ENCODE measurements at regions of chr11 and their contacts with region 1.

Region 1: GRCh38 chr11:75142714-75143419 is 8.0 kb upstream of the SLCO2B1 start:
- DNase-seq: peak; percentile 68
- CTCF ChIP-seq: peak; percentile 6

Region 2: DNA sequence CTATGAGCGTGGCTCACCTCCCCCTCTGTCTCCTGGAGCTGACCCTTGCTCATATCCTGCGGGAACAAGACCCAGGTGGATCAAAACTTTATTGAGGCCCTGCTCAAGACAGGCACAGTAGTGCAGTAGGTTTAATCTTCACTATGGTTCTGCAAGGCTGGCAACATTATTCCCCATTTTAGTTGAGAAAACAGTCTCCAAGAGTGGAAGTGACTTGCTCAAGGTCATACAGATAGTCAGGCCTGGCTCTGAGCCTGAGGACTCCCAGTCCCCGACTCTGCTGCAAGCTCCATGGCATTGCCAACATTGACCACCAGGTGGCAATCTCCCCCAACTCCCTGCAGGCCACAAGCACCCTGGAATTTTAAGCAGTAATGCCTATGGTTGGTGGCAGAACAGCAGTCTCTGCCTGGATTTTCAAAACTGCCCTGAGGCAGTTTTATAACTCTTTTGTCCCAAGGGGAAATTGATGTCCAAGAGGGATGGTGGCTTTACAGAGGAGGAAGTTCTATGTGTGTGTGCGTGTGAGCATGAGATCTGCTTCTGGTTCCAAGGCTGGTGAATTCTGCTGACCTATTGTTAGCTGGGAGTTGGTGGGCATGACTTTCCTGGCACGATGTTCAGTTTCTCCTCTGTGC is 120.0 kb before region 1 on chr11:
- CTCF ChIA-PET with region 1: interaction called, 20 read pairs
- POLR2A ChIA-PET with region 1: no interaction called
- DNase-seq: peak; percentile 83
- CTCF ChIP-seq: peak; percentile 97

Region 3: GRCh38 chr11:75100314-75100713 is 42.6 kb before region 1 on chr11:
- CTCF ChIA-PET with region 1: interaction called, 27 read pairs
- POLR2A ChIA-PET with region 1: no interaction called
- DNase-seq: peak; percentile 75
- CTCF ChIP-seq: no peak

Region 4: DNA sequence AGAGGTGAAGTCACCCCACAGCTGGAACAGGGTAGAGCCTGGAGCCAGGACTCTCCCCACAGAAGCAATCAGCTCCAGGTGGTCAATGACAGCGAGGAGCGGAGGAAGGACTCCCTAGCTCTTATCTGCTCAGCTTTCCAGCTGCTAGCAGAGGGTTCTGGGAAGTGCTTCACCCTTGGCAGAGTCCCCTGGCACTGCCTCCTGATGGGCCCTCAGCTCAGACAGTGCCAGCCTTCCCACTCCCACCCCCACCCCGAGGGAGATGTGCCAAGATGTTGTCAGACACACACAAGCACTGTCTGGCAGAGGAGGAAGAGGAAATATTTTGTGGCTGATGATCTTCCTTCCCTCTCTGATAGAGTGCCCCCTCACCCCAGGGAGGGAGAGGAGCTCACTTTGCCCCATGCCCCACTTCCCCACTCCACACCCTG is 52.3 kb after region 1 on chr11:
- CTCF ChIA-PET with region 1: interaction called, 43 read pairs
- POLR2A ChIA-PET with region 1: no interaction called
- DNase-seq: no peak
- CTCF ChIP-seq: no peak

Region 5: DNA sequence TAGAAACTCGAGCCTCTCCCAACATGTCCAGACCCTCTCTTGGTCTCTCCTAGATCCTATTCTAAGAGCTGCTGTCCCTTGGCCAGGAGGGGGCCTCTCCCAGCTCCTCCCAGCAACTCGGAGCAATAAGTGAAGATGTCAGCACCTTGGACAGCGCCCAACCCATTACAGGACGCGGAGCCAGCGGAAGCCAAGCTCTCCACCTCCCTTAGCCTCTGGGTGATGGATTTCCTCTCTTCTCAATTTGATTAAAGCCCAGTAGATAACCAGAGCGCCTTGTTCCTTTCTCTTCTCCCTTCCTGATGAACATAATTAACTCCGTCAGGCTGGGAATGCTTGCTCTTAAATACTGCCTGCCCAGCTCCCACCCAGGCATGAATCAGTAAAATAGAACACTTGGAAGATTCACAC is 71.5 kb after region 1 on chr11:
- CTCF ChIA-PET with region 1: interaction called, 301 read pairs
- POLR2A ChIA-PET with region 1: no interaction called
- DNase-seq: peak; percentile 74
- CTCF ChIP-seq: no peak

Region 6: GRCh38 chr11:75241036-75241905 is 98.4 kb after region 1 on chr11:
- CTCF ChIA-PET with region 1: interaction called, 496 read pairs
- POLR2A ChIA-PET with region 1: interaction called, 9 read pairs
- DNase-seq: peak; percentile 95
- CTCF ChIP-seq: peak; percentile 99

Region 7: DNA sequence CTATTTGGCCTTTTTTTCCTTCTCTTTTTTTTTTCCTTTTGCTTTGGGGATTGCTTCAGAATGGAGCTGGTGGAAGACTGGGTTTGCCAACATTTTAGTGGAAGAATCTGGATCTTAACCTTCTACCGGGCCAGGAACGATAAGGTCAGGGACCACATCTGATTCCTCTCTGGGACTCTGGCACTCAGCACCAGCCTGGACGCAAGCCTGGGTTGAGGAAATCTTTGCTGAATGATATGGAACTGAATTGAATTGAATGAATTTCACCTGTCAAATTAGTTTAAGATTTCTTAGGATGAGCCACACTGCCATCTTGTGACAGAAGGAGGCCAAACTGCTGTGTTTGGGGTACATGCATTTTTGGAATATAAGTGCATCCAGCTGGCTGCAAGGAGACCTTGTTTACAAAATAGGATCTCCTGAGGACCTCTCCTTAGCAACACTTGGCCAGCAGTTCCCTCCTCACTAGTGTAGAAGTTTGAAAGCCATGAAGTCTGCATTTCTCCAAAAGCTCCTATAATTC is 128.1 kb after region 1 on chr11:
- CTCF ChIA-PET with region 1: interaction called, 17 read pairs
- POLR2A ChIA-PET with region 1: no interaction called
- DNase-seq: no peak
- CTCF ChIP-seq: peak; percentile 49

Measured in GM10248 (cell line).